A549 (cell line): ENCODE measurements at regions of chr9 and their contacts with region 1.

Region 1: DNA sequence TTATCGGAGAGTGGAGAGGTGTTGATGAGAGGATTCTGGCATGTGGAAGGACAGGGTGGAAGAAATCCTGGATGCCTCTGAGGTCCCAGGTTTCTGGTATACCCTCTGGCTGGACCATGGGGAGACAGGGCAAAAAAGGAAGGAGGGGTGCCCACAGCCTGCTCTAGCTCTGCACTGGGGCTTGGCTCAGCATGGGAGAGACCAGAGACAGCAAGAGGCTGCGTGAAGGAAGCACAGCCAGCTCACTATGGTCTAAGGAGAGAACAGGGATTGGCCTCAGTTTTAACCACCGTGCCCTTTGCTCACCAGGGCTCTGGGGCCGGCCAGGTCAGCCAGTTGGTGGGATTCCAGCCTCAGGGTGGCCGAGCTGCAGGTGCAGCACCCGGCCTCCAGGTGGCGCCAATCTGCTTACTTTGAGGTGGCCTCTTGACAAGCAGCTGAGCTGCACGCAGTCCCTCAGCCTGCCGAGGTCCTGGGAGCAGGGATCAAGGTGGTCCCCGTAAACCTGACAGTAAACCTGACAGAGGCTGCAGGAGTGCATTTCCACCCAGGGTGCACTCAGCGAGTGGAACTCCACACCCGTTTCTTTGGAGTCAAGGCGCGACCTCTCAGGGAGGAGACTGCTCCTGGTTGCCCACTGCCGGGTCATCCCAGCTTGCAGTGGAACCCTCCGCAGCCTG is 25.0 kb upstream of the SPTLC1 start:
- DNase-seq: peak; percentile 72 to 73
- ATAC-seq: peak; percentile 41 to 81; a peak in 5 of 6 replicates
- H3K4me3 ChIP-seq: no peak overlapping the region
- H3K27ac ChIP-seq: peak overlapping the region; percentile 12 to 73; a peak in 3 of 6 replicates
- H3K4me1 ChIP-seq: peaks cover 5% of the 10 kb centered on the region; the same call in 2 of the 3 replicates
- CTCF ChIP-seq: peak; percentile 88
- EP300 ChIP-seq: no peak
- POLR2A ChIP-seq: no peak
- RAD21 ChIP-seq: peak; percentile 83 to 89

Region 2: GRCh38 chr9:91334053-91334452 is 806.2 kb before region 1 on chr9:
- CTCF ChIA-PET with region 1: no interaction called
- POLR2A ChIA-PET with region 1: no interaction called
- DNase-seq: no peak
- ATAC-seq: no peak
- H3K4me3 ChIP-seq: no peak overlapping the region
- H3K27ac ChIP-seq: no peak overlapping the region
- H3K4me1 ChIP-seq: no peaks in the 10 kb centered on the region
- CTCF ChIP-seq: no peak
- EP300 ChIP-seq: no peak
- POLR2A ChIP-seq: no peak
- RAD21 ChIP-seq: no peak

Region 3: GRCh38 chr9:91935066-91935749 is 205.0 kb before region 1 on chr9:
- CTCF ChIA-PET with region 1: no interaction called
- POLR2A ChIA-PET with region 1: no interaction called
- DNase-seq: no peak
- ATAC-seq: no peak
- H3K4me3 ChIP-seq: no peak overlapping the region
- H3K27ac ChIP-seq: no peak overlapping the region
- H3K4me1 ChIP-seq: no peaks in the 10 kb centered on the region
- CTCF ChIP-seq: no peak
- EP300 ChIP-seq: no peak
- POLR2A ChIP-seq: no peak
- RAD21 ChIP-seq: no peak

Region 4: DNA sequence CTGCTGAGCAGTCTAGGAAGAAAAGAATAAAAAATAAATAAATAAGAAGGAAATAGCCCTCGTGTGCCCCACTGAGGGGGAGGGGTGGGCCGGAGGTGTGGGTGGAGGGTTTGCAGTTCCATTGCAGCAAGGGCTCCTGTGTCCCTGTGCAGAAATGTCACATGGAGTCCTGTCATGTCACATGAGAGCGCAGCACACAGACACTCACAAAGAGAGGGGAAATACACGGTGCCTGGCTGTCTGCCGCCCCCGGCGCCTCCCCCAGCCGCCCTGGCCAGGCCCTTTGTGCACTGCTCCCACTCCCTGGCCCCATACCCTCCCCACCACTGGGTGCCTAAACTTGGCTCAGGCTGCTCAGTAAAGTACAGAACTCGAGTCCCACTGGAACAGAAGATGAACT is 30.6 kb after region 1 on chr9:
- CTCF ChIA-PET with region 1: interaction called, 25 read pairs
- POLR2A ChIA-PET with region 1: no interaction called
- DNase-seq: no peak
- ATAC-seq: peak in 1 of 2 experiments; percentile 30; a peak in 1 of 6 replicates
- H3K4me3 ChIP-seq: no peak overlapping the region
- H3K27ac ChIP-seq: no peak overlapping the region
- H3K4me1 ChIP-seq: no peaks in the 10 kb centered on the region
- CTCF ChIP-seq: no peak
- EP300 ChIP-seq: no peak
- POLR2A ChIP-seq: no peak
- RAD21 ChIP-seq: no peak

Region 5: GRCh38 chr9:92206488-92206887 is 66.3 kb after region 1 on chr9:
- CTCF ChIA-PET with region 1: interaction called, 31 read pairs
- POLR2A ChIA-PET with region 1: no interaction called
- DNase-seq: no peak
- ATAC-seq: peak; percentile 52 to 77
- H3K4me3 ChIP-seq: no peak overlapping the region
- H3K27ac ChIP-seq: no peak overlapping the region
- H3K4me1 ChIP-seq: no peaks in the 10 kb centered on the region
- CTCF ChIP-seq: no peak
- EP300 ChIP-seq: no peak
- POLR2A ChIP-seq: no peak
- RAD21 ChIP-seq: no peak

Region 6: GRCh38 chr9:92254381-92255337 is 114.4 kb after region 1 on chr9:
- CTCF ChIA-PET with region 1: interaction called, 55 read pairs
- POLR2A ChIA-PET with region 1: no interaction called
- DNase-seq: no peak
- ATAC-seq: peak; percentile 38 to 54; a peak in 2 of 6 replicates
- H3K4me3 ChIP-seq: no peak overlapping the region
- H3K27ac ChIP-seq: no peak overlapping the region
- H3K4me1 ChIP-seq: no peaks in the 10 kb centered on the region
- CTCF ChIP-seq: no peak
- EP300 ChIP-seq: no peak
- POLR2A ChIP-seq: no peak
- RAD21 ChIP-seq: no peak

Region 7: GRCh38 chr9:92293452-92294296 is 153.5 kb after region 1 on chr9 and contains the start of gene IARS1:
- CTCF ChIA-PET with region 1: interaction called, 38 read pairs
- POLR2A ChIA-PET with region 1: no interaction called
- DNase-seq: peak; percentile 96 to 99
- ATAC-seq: peak; percentile 97 to 98
- H3K4me3 ChIP-seq: peak within 1 kb of the TSS; percentile 73
- H3K27ac ChIP-seq: peak within 1 kb of the TSS; percentile 96 to 97
- H3K4me1 ChIP-seq: peaks cover 22% of the 10 kb centered on the region
- CTCF ChIP-seq: peak; percentile 42; the same call in 2 of the 3 replicates
- EP300 ChIP-seq: no peak
- POLR2A ChIP-seq: peak; percentile 86
- RAD21 ChIP-seq: 0 out of 5 replicates have a peak, but pooled peaks of 1 of the 2 experiments have one; percentile 13
- polyA plus RNA-seq, gene IARS1: 244 and 328 TPM in 2 replicates

Region 8: DNA sequence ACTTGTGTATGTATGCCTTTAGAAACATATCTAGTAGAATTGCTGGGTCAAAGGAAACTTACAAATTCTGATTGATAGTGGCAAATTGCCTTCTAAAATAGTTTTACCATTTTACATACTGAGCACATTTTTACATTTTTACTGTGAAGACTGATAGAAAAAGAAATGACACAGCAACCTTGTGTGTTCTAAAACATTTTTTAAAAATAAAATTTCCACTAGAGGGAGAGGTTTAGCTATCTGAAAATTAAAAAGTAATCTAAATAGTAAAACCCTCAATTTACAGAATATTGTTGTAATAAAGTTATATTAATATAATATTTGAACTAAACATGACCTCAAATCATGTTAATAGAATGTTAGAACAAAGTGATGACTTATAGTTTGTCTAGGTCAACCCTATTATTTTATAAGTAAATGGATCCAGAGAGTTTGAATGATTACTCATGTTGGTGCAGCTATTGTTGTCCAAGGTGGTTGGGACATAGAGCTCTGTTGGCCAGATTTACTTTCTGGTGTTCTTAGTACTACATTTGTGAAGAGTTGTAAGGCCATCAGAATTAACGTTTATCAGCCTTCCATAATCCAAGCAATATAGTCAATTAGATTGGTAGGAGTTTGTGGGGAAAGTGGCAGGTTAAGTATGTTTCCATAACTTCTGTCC is 202.7 kb after region 1 on chr9:
- CTCF ChIA-PET with region 1: interaction called, 11 read pairs
- POLR2A ChIA-PET with region 1: no interaction called
- DNase-seq: no peak
- ATAC-seq: no peak
- H3K4me3 ChIP-seq: no peak overlapping the region
- H3K27ac ChIP-seq: no peak overlapping the region
- H3K4me1 ChIP-seq: no peaks in the 10 kb centered on the region
- CTCF ChIP-seq: peak; percentile 27; the same call in 2 of the 3 replicates
- EP300 ChIP-seq: no peak
- POLR2A ChIP-seq: no peak
- RAD21 ChIP-seq: peak in 1 of 2 experiments; percentile 43; a peak in 3 of 5 replicates